ENCODE measurements at regions of chr3 and their contacts with region 1.

Region 1: DNA sequence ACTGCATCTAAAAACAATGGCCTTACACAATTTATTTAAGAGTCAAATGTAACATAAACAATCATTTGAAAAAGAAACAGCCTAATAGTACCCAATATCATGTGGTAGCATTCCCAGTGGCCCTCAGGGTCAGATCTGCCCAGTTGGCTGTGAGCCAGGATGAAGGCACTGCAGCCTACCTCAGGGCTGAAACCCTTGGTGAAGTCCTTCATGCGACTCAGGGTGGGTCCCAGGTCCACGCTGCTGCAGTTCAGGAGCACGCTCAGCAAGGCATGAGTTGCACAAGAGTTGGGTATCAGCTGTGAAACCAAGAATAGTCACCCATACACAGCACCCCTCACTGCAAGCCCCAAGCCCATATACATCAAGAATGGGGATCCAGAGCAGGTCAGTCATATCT is 37.1 kb downstream of the SEMA3G start:
- DNase-seq: no peak
- H3K4me3 Mint-ChIP-seq: peak overlapping the region; percentile 86
- H3K27ac Mint-ChIP-seq: no peak overlapping the region
- H3K4me1 Mint-ChIP-seq: peaks cover 35% of the 10 kb centered on the region
- H3K27me3 Mint-ChIP-seq: no peaks in the 10 kb centered on the region

Region 2: GRCh38 chr3:52423173-52423572 is 15.4 kb after region 1 on chr3:
- CTCF ChIA-PET with region 1: interaction called, 19 read pairs
- intact Hi-C with region 1: no loop called
- DNase-seq: no peak
- H3K4me3 Mint-ChIP-seq: no peak overlapping the region
- H3K27ac Mint-ChIP-seq: no peak overlapping the region
- H3K4me1 Mint-ChIP-seq: no peaks in the 10 kb centered on the region
- H3K27me3 Mint-ChIP-seq: no peaks in the 10 kb centered on the region

Region 3: DNA sequence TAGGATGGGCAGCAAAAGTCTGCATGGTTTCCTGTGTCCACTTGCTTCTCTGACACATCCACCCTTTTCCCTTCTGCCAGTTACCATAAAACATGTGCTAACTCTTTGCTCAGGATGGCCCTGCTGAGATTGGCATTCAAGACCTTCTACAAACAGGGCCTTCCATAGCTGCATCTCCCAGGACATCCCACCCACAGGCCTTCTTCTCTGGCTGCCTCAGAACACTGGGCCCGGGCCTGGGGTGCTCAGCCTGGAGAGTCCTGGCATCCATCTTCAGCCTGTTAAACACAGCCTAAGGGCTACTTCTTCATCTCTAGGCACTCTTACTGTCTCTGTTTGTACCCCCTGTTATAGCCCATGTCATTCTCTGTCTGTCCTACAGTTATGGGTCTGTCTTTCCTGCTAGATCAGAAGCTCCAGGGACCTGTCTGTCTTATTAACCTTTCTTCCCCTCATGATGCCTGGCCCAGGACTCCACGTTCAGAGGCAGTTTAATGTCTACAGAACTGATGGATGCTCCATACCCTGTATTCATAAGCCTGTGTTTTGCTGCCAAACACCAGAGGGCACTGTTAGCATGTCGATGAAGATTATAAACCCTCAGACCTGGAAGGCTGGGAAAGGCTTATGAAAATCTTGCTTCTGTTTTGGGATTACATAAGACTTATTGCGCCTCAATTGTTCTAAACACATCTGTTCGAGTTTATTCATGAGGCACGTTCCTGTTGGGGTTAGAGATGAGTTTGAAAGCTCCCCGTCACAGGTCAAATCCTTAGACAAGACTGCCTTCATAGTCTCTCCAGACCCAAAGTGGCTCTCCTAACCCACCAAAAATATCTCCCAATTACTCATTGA is 20.6 kb after region 1 on chr3:
- CTCF ChIA-PET with region 1: interaction called, 19 read pairs
- intact Hi-C with region 1: no loop called
- DNase-seq: peak; percentile 64
- H3K4me3 Mint-ChIP-seq: no peak overlapping the region
- H3K27ac Mint-ChIP-seq: no peak overlapping the region
- H3K4me1 Mint-ChIP-seq: no peaks in the 10 kb centered on the region
- H3K27me3 Mint-ChIP-seq: no peaks in the 10 kb centered on the region

Region 4: DNA sequence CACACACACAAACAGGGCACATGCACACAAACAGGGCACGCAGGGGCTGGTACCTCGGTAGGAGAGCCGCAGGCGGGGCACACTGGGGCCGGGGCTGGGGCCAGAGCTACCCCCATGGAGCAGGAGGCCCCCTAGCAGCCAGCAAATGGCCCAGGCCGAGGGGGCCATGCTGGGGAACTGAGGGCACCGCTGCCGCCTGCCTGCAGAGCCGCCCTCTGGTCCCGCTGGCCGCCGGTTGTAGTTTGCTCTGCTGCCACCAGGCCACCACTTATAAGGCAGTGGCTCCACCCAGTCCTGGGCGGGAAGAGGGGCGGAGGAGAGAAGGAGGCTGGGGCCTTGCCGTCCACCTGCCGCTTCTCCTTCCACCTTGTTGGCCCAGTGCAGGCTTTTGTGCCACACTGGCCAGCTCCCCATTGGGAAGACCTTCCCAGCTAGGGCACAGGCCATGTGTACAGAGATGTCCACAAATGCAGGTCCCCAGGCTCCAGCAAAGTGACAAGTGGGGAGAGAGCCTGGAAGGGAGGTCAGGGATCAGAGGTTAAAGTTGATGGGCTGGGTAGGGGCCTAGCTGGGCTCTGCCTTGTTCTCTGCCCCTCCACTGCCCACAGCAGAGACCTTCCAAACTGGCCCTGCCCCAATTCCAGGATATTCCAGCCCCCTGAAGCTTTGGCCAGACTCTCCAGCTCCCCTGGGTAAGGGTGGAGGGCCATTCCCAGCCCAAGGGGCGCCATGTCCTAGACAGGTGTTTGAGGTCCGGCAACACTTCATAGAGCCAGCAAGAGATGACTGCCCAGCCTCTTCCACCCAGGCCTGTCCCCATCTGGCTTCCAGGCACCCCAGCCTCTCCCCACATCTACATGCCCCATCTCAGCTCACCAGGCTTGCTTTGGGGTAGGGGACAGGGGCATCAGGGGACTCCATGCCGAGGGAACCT is 37.3 kb after region 1 on chr3 and contains the start of gene SEMA3G:
- CTCF ChIA-PET with region 1: interaction called, 4 read pairs
- intact Hi-C with region 1: loop called (anchors 1 kb)
- DNase-seq: peak; percentile 80
- H3K4me3 Mint-ChIP-seq: no peak within 1 kb of the TSS
- H3K27ac Mint-ChIP-seq: no peak within 1 kb of the TSS
- H3K4me1 Mint-ChIP-seq: peaks cover 4% of the 10 kb centered on the region
- H3K27me3 Mint-ChIP-seq: no peaks in the 10 kb centered on the region
- total RNA-seq, gene SEMA3G: not detected

Region 5: GRCh38 chr3:52455283-52456168 is 47.7 kb after region 1 on chr3 and contains the start of gene NISCH:
- CTCF ChIA-PET with region 1: interaction called, 10 read pairs
- intact Hi-C with region 1: no loop called
- DNase-seq: peak; percentile 96
- H3K4me3 Mint-ChIP-seq: peak within 1 kb of the TSS; percentile 94
- H3K27ac Mint-ChIP-seq: peak within 1 kb of the TSS; percentile 96
- H3K4me1 Mint-ChIP-seq: peaks cover 35% of the 10 kb centered on the region
- H3K27me3 Mint-ChIP-seq: no peaks in the 10 kb centered on the region
- total RNA-seq, gene NISCH: 50.4 to 52.5 TPM

Region 6: GRCh38 chr3:52509753-52510328 is 102.1 kb after region 1 on chr3:
- CTCF ChIA-PET with region 1: no interaction called
- intact Hi-C with region 1: no loop called
- DNase-seq: no peak
- H3K4me3 Mint-ChIP-seq: no peak overlapping the region
- H3K27ac Mint-ChIP-seq: no peak overlapping the region
- H3K4me1 Mint-ChIP-seq: no peaks in the 10 kb centered on the region
- H3K27me3 Mint-ChIP-seq: no peaks in the 10 kb centered on the region

Region 7: DNA sequence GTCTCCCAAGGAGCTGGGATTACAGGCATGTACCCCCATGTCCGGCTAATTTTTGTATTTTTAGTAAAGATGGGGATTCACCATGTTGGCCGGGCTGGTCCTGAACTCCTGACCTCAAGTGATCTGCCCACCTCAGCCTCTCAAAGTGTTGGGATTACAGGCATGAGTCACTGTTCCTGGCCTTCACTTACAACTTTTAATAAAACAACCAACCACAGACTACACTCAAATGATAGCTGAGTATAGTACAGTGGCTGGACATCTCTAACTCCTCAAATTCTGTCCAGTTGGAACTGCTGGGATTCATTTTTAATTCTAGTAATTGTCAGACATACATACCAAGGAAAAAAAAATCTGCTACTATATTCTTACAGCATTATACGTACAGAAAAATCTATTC is 206.9 kb after region 1 on chr3:
- CTCF ChIA-PET with region 1: no interaction called
- intact Hi-C with region 1: no loop called
- DNase-seq: no peak
- H3K4me3 Mint-ChIP-seq: no peak overlapping the region
- H3K27ac Mint-ChIP-seq: no peak overlapping the region
- H3K4me1 Mint-ChIP-seq: no peaks in the 10 kb centered on the region
- H3K27me3 Mint-ChIP-seq: no peaks in the 10 kb centered on the region